IMR-90 (cell line): ENCODE measurements at regions of chr18 and their contacts with region 1.

Region 1: GRCh38 chr18:63831080-63831788 is 56.0 kb downstream of the SERPINB7 start:
- DNase-seq: peak; percentile 84
- ATAC-seq: peak; percentile 61
- H3K4me3 ChIP-seq: no peak overlapping the region
- H3K27ac ChIP-seq: no peak overlapping the region; the same call in 1 of the 2 replicates
- H3K4me1 ChIP-seq: peaks cover 11% of the 10 kb centered on the region; the same call in 1 of the 2 replicates
- H3K27me3 ChIP-seq: no peaks in the 10 kb centered on the region
- CTCF ChIP-seq: no peak
- POLR2A ChIP-seq: 0 out of 2 replicates have a peak, but pooled peaks have one; percentile 13
- RAD21 ChIP-seq: no peak

Region 2: GRCh38 chr18:63762518-63762917 is 68.7 kb before region 1 on chr18:
- CTCF ChIA-PET with region 1: no interaction called
- POLR2A ChIA-PET with region 1: no interaction called
- dilution Hi-C with region 1: no loop called
- in situ Hi-C with region 1: no loop called
- intact Hi-C with region 1: loop called (anchors 5 kb)
- DNase-seq: peak; percentile 89
- ATAC-seq: peak; percentile 37
- H3K4me3 ChIP-seq: no peak overlapping the region
- H3K27ac ChIP-seq: no peak overlapping the region
- H3K4me1 ChIP-seq: peaks cover 2% of the 10 kb centered on the region; the same call in 1 of the 2 replicates
- H3K27me3 ChIP-seq: no peaks in the 10 kb centered on the region
- CTCF ChIP-seq: no peak
- POLR2A ChIP-seq: no peak
- RAD21 ChIP-seq: no peak